K562 (cell line): ENCODE measurements at regions of chr3 and their contacts with region 1.

Region 1: GRCh38 chr3:169668957-169669681 is 5.6 kb upstream of the MECOM start:
- DNase-seq: peak; percentile 43 to 75 (median 61)
- ATAC-seq: peak; percentile 100
- H3K4me3 ChIP-seq: peak overlapping the region; percentile 25; the same call in 1 of the 2 replicates
- H3K27ac ChIP-seq: no peak overlapping the region
- H3K4me1 ChIP-seq: peaks cover 0 to 15% of the 10 kb centered on the region in 2 experiments; a peak in 3 of 5 replicates
- H3K27me3 ChIP-seq: peaks cover 38 to 42% of the 10 kb centered on the region in 2 experiments
- CTCF ChIP-seq: peak; percentile 77 to 90 (median 82)
- EP300 ChIP-seq: no peak
- POLR2A ChIP-seq: no peak
- RAD21 ChIP-seq: peak; percentile 88 to 89

Region 2: DNA sequence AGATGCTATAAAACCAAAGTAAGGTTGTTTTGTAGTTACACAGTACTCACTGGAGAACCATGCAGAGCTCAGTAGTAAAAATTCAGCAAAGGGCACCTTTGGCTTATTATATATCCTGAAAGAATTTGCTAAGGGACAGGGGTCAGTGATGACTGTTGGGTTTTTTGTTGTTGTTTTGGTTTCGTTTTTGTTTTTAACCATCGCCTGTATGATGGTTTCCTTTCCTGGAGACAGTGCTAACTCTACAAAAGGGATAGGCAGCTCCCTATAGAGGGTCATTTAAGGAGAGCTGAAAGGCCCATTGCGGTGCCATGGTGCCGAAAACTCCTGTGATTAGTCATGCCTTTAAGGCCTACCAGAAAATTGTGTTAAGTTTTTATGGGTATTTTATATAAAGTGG is 1455.2 kb before region 1 on chr3:
- CTCF ChIA-PET with region 1: no interaction called
- POLR2A ChIA-PET with region 1: no interaction called
- in situ Hi-C with region 1: no loop called
- intact Hi-C with region 1: loop called (anchors 2 kb)
- DNase-seq: no peak
- ATAC-seq: no peak; the same call in 2 of the 3 replicates
- H3K4me3 ChIP-seq: no peak overlapping the region
- H3K27ac ChIP-seq: no peak overlapping the region
- H3K4me1 ChIP-seq: no peaks in the 10 kb centered on the region
- H3K27me3 ChIP-seq: no peaks in the 10 kb centered on the region; a peak in 1 of 5 replicates
- CTCF ChIP-seq: no peak
- EP300 ChIP-seq: no peak
- POLR2A ChIP-seq: no peak
- RAD21 ChIP-seq: no peak

Region 3: DNA sequence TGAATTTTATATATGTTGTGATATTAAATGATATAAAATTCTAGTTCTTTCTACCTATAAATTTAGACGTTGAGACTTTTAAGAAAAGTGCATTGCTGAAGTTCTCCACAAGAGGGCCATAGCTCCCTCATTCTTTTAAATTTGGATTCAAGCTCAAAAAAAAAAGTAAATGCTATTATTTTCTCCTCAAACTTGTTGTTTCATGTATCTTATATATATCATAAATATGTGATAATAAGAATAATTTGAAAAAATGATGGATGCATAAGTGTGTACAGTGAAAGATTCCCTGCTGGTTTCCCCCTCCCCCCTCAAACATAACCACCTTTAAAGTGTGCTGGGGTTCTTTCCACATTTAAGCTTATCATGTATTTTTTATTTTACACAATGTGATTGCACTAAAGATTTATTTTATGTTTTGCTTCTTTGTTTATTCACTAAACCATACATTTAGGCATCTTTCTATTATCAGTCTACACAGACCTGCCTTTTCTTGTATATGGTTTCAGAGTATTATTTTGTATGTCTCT is 804.0 kb before region 1 on chr3:
- CTCF ChIA-PET with region 1: no interaction called
- POLR2A ChIA-PET with region 1: no interaction called
- in situ Hi-C with region 1: no loop called
- intact Hi-C with region 1: loop called (anchors 2 kb)
- DNase-seq: peak in 3 of 4 experiments; percentile 3 to 14 (median 8)
- ATAC-seq: no peak
- H3K4me3 ChIP-seq: no peak overlapping the region
- H3K27ac ChIP-seq: no peak overlapping the region
- H3K4me1 ChIP-seq: no peaks in the 10 kb centered on the region
- H3K27me3 ChIP-seq: no peaks in the 10 kb centered on the region
- CTCF ChIP-seq: peak in 2 of 3 experiments; percentile 34 to 52; a peak in 2 of 6 replicates
- EP300 ChIP-seq: no peak
- POLR2A ChIP-seq: no peak
- RAD21 ChIP-seq: peak; percentile 22 to 50; a peak in 3 of 4 replicates

Region 4: GRCh38 chr3:169041677-169042171 is 627.4 kb before region 1 on chr3:
- CTCF ChIA-PET with region 1: interaction called, 5 read pairs
- POLR2A ChIA-PET with region 1: no interaction called
- in situ Hi-C with region 1: no loop called
- intact Hi-C with region 1: loop called (anchors 2 kb)
- DNase-seq: peak in 3 of 4 experiments; percentile 11 to 20 (median 13)
- ATAC-seq: peak; percentile 81
- H3K4me3 ChIP-seq: no peak overlapping the region
- H3K27ac ChIP-seq: no peak overlapping the region
- H3K4me1 ChIP-seq: no peaks in the 10 kb centered on the region
- H3K27me3 ChIP-seq: no peaks in the 10 kb centered on the region
- CTCF ChIP-seq: peak; percentile 18 to 61 (median 22); a peak in 3 of 6 replicates
- EP300 ChIP-seq: no peak
- POLR2A ChIP-seq: no peak
- RAD21 ChIP-seq: peak; percentile 55 to 56

Region 5: DNA sequence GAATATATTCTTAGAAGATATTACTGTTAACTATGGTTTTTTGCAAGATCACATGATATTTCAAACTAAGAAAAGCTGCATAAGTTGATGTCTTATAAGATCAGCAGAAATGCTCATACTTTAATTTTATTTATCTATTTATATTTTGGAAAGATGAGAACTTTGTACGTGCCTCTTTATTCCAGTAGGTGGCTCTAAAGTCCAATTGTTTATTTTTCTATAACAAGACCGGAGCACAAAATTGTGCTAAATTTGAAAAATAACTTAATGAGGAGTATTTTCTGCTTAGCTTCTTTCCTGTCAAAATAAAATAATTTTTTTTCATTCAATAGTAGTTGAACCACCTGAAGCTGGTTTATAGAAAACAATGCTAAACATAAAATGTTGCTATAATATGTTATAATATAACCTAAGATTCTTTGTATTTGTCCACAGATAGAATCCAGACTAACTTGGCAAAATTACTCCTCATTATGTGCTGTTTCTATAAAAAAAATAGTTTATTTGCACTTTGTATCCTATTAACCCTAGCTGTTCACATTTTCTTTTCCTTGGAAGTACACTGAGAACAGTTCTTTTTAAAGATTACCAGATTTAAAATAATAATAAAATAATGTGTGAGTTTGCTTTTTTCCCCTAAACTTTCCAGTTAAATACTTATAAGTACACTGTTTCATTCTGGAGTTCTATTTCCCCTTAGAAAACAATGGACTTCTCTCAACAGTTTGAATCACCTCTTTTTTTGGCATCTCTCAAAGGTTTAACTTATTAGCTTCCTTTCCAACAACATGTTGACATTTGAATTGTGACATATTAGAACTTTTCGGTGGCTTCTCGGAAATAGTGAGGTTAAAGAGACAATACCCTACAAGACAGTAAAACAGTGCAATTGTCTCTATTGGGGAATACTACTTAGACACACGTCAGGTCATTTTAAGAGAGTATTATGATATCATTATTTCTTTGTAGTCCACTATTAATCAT is 535.6 kb before region 1 on chr3:
- CTCF ChIA-PET with region 1: interaction called, 5 read pairs
- POLR2A ChIA-PET with region 1: no interaction called
- in situ Hi-C with region 1: no loop called
- intact Hi-C with region 1: loop called (anchors 1 kb)
- DNase-seq: no peak
- ATAC-seq: peak; percentile 34; the same call in 1 of the 3 replicates
- H3K4me3 ChIP-seq: no peak overlapping the region
- H3K27ac ChIP-seq: no peak overlapping the region
- H3K4me1 ChIP-seq: no peaks in the 10 kb centered on the region
- H3K27me3 ChIP-seq: no peaks in the 10 kb centered on the region
- CTCF ChIP-seq: peak in 2 of 3 experiments; percentile 13 to 63; a peak in 3 of 6 replicates
- EP300 ChIP-seq: no peak
- POLR2A ChIP-seq: no peak
- RAD21 ChIP-seq: peak; percentile 60 to 62; a peak in 3 of 4 replicates

Region 6: DNA sequence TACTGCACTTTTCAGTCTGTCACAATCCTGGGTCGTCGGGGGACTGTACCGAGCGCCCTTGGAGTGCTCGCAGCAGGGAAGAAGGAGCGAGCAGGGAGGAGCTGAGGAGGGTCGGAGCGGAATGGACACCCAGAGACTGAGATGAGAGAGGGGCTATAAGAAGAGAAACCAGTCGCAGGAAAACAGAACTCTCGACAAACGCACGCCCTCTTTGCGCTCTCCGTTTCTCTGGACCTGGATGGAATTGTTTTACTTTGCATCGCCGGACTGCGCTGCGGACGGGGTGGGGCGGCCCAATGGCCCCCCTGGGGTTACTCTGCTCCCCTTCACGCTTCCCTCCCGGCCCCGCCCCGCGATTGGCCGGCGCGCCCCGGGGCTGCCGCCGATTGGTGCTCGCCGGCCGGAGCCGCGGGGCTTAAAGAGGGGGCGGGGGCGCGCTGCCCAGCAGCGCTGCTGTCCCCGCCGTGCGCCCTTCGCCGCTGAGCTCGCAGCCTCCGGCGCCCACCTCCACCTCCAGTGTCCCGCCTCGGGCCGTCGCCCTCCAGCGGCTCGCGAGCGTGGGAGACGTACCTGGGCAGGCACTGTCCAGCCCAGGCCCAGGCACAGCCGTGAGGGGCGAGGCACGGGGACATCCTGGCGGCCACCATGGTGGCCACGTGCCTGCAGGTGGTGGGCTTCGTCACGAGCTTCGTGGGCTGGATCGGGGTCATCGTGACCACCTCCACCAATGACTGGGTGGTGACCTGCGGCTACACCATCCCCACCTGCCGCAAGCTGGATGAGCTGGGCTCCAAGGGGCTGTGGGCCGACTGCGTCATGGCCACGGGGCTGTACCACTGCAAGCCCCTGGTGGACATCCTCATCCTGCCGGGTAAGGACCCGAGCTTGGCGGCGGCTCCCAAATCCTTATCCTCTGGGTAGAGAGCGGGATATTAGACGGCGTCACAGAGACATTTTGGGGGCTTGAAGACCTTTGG is 749.6 kb after region 1 on chr3 and contains the start of gene CLDN11:
- CTCF ChIA-PET with region 1: no interaction called
- POLR2A ChIA-PET with region 1: no interaction called
- in situ Hi-C with region 1: no loop called
- intact Hi-C with region 1: no loop called
- DNase-seq: peak in 3 of 4 experiments; percentile 36 to 49 (median 46)
- ATAC-seq: peak; percentile 26; the same call in 1 of the 3 replicates
- H3K4me3 ChIP-seq: no peak within 1 kb of the TSS
- H3K27ac ChIP-seq: no peak within 1 kb of the TSS
- H3K4me1 ChIP-seq: peaks cover 0 to 12% of the 10 kb centered on the region in 2 experiments; a peak in 2 of 5 replicates
- H3K27me3 ChIP-seq: no peaks in the 10 kb centered on the region
- CTCF ChIP-seq: no peak
- EP300 ChIP-seq: no peak
- POLR2A ChIP-seq: no peak
- RAD21 ChIP-seq: no peak
- polyA plus RNA-seq, gene CLDN11: 0.14 to 0.15 TPM